ENCODE measurements at regions of chr17 and their contacts with region 1.

Region 1: GRCh38 chr17:40038882-40039513 is 15.2 kb downstream of the MED24 start:
- DNase-seq: no peak
- ATAC-seq: peak; percentile 92

Region 2: GRCh38 chr17:40068917-40069750 is 30.1 kb after region 1 on chr17:
- intact Hi-C with region 1: loop called (anchors 5 kb)
- DNase-seq: peak; percentile 95
- ATAC-seq: peak; percentile 66

Region 3: DNA sequence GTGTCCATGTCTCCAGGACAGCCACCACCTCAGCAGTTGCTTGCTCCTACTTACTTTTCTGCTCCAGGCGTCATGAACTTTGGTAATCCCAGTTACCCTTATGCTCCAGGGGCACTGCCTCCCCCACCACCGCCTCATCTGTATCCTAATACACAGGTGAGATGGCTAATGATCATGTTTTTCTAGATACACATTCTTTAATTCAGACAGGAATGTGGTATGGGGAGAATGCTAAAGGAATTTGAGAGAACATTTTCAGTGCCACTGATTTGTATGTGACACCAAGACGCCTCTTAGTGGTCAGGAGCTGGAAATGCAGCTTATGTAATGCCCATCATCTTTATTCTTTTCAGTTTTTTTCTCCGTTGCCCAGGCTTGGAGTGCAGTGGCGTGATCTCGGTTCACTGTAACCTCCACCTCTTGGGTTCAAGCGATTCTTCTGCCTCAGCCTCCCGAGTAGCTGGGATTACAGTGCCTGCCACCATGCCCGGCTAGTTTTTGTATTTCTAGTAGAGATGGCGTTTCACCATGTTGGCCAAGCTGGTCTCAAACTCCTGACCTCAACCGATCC is 129.3 kb after region 1 on chr17:
- intact Hi-C with region 1: loop called (anchors 5 kb)
- DNase-seq: no peak
- ATAC-seq: peak; percentile 73